ENCODE measurements at regions of chr13 and their contacts with region 1.

Region 1: DNA sequence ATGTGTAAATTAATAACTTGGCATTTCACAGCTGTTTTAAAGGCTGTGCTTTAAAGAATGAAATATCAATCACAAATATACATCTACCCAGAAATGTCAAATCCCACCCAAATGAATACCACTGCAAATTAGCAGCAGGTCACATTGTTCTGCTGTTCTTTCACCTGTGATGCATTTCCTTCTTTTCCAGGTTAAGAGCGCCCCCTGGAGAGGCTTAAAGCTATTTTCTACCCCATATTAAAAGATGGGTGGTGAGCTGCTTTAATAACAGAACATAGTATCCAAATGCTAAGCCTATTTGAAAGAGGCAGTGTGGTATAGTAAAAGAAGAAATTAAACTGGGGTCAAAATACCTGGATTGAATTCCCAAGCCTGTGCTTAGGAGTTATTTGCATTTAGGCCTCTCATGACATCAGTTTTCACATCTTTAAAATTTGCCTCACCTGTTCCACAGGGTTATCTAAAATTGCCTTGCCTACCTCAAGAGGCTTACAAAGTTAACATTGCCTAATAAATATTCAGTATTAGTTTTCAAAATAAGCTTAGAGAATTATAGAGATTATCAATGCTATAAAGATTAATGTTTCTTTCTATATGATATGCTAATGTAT is 396.9 kb upstream of the SLITRK5 start:
- DNase-seq: peak; percentile 10
- H3K4me3 ChIP-seq: no peak overlapping the region
- H3K27ac ChIP-seq: no peak overlapping the region
- H3K27me3 ChIP-seq: no peaks in the 10 kb centered on the region
- CTCF ChIP-seq: peak; percentile 76

Region 2: DNA sequence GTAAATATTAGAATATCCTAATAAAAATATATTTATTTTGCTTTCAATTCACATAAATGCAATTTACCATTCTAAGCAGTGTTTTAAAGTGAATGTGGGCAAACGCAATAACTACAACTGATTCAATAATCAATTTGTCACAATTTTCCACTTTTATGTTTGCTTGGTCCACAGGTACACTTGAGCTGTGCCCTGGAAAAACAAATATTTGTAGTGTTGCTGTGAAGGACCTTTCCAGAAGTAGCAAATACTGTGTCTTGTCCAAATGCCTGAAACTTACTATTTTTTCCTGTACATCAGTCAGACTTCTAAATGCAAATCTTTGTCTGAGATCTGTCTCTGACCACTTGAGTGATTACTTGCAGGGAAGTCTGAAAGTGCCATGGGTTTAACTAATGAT is 448.9 kb before region 1 on chr13:
- CTCF ChIA-PET with region 1: no interaction called
- POLR2A ChIA-PET with region 1: no interaction called
- DNase-seq: no peak
- H3K4me3 ChIP-seq: no peak overlapping the region
- H3K27ac ChIP-seq: no peak overlapping the region
- H3K27me3 ChIP-seq: no peaks in the 10 kb centered on the region
- CTCF ChIP-seq: no peak

Region 3: DNA sequence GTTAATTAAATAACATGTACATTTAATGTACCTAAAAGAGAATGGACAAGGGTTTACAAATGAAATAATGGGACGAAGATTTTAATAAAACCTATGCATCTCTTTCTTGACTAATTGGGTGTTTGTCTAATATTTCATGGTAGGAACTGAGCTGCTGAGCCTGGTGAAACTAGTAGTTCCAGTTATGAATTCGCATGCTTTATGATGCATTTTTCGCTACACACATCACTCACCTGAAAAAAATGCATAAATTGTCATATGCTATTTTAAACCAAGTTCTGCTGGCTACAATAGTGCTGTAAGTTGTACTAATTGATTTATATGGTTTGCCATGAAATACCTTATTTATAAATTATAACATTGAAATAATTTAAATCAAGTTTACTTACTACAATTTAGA is 409.9 kb before region 1 on chr13:
- CTCF ChIA-PET with region 1: interaction called, 256 read pairs
- POLR2A ChIA-PET with region 1: no interaction called
- DNase-seq: no peak
- H3K4me3 ChIP-seq: no peak overlapping the region
- H3K27ac ChIP-seq: no peak overlapping the region
- H3K27me3 ChIP-seq: no peaks in the 10 kb centered on the region
- CTCF ChIP-seq: no peak

Region 4: GRCh38 chr13:86882107-86882506 is 392.2 kb before region 1 on chr13:
- CTCF ChIA-PET with region 1: interaction called, 14 read pairs
- POLR2A ChIA-PET with region 1: no interaction called
- DNase-seq: no peak
- H3K4me3 ChIP-seq: no peak overlapping the region
- H3K27ac ChIP-seq: no peak overlapping the region
- H3K27me3 ChIP-seq: no peaks in the 10 kb centered on the region
- CTCF ChIP-seq: no peak

Region 5: DNA sequence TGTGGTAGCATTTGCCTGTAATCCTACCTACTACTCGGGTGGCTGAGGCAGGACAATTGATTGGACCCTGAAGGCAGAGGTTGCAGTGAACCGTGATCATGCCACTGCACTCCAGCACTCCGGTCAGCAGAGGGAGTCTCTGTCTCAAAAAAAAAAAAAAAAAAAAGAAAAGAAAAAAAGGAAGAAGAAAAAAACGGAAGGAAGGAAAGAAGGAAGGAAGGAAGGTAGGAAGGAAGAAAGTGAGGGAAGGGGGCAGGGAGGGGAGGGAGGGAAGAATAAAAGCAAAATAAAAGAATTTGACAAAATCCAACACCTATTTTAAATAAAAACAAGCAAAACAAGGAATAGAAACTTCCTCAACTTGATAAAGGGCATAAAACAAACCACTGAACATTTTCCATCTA is 14.8 kb before region 1 on chr13:
- CTCF ChIA-PET with region 1: interaction called, 26 read pairs
- POLR2A ChIA-PET with region 1: no interaction called
- DNase-seq: no peak
- H3K4me3 ChIP-seq: no peak overlapping the region
- H3K27ac ChIP-seq: no peak overlapping the region
- H3K27me3 ChIP-seq: no peaks in the 10 kb centered on the region
- CTCF ChIP-seq: peak; percentile 36